Left colon (tissue), 2 donors: ENCODE measurements at regions of chr18 and their contacts with region 1.

Region 1: DNA sequence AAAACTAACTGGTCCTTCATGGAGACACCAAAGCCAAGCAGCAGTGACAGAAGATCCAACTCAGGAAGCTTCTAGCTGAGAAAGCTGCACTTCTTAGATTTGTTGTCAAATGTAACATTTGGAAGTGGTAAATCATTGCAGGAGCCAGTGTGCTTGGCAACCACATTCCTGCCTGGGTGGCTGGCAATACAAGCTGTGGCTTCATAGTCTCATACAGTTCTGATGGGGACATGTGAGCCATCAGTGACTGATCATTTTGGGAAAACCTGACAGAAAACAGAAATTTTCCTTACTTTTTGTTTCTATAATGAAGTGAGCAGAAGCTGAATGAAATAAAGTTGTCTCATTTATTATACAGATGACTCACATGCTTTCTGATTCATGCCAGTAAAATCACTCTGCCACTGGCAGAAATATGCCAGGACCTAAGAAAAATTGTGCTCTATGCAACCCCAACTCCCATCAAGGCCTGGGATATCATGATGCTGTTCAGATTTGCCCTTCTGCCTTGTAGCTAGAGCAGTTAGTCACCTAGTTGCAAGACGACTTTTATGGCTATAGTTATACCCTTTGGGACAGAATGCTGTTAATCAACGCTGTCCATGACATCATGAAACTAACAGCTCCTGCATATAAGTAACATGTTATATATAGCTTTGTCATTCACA is 508.1 kb downstream of the ADCYAP1 start:
- DNase-seq: no peak
- ATAC-seq: no peak

Region 2: GRCh38 chr18:1357724-1358123 is 55.1 kb before region 1 on chr18:
- intact Hi-C with region 1: loop called in 1 of 2 experiments (anchors 5 kb)
- DNase-seq: no peak
- ATAC-seq: no peak

Region 3: DNA sequence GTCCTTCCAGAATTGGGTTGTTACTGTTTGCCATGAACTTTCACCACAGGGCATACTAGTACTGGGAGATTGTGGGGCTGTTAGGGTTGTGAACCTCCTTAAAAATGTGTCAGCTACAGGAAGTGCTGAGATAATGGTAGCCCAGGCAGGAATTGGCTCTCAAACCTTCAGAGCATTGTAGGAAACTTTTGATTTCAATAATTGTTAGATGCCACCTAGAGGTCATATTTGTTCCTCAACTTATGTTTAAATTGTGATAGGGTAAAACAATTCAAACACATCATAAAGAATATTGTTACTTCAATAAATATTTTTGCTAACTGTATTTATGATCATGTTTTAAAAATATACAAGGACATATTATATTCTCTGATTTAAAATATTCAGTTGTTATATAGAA is 86.5 kb after region 1 on chr18:
- intact Hi-C with region 1: no loop called
- DNase-seq: no peak
- ATAC-seq: no peak

Region 4: GRCh38 chr18:1595195-1595594 is 182.4 kb after region 1 on chr18:
- intact Hi-C with region 1: loop called in 1 of 2 experiments (anchors 10 kb)
- DNase-seq: no peak
- ATAC-seq: no peak

Region 5: DNA sequence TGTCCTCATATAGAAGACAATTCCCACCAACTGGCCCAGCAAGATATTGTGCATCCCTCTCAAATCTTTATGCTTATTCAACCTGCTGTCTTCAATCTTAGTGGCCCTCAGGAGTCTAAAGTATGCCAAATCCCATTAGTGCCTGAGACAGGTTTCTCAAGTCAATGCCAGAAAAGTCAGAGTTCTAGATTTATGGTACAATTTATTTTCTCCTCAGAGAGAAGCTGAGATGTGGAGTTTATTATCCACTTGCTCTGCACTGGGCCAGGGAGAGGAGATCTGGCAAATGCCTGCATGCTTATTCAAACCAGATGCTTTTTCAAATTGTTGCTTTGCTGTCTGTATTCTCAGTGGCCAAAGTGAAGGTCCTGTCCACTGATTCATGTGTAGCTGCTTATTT is 333.3 kb after region 1 on chr18:
- intact Hi-C with region 1: no loop called
- DNase-seq: no peak
- ATAC-seq: no peak